Calu3 (cell line): ENCODE measurements at regions of chr3 and their contacts with region 1.

Region 1: GRCh38 chr3:152444029-152444641 is 175.4 kb downstream of the MBNL1 start:
- DNase-seq: no peak
- H3K4me3 Mint-ChIP-seq: no peak overlapping the region
- H3K27ac Mint-ChIP-seq: no peak overlapping the region
- H3K4me1 Mint-ChIP-seq: peaks cover 22% of the 10 kb centered on the region
- H3K27me3 Mint-ChIP-seq: no peaks in the 10 kb centered on the region
- CTCF ChIP-seq: peak; percentile 63

Region 2: DNA sequence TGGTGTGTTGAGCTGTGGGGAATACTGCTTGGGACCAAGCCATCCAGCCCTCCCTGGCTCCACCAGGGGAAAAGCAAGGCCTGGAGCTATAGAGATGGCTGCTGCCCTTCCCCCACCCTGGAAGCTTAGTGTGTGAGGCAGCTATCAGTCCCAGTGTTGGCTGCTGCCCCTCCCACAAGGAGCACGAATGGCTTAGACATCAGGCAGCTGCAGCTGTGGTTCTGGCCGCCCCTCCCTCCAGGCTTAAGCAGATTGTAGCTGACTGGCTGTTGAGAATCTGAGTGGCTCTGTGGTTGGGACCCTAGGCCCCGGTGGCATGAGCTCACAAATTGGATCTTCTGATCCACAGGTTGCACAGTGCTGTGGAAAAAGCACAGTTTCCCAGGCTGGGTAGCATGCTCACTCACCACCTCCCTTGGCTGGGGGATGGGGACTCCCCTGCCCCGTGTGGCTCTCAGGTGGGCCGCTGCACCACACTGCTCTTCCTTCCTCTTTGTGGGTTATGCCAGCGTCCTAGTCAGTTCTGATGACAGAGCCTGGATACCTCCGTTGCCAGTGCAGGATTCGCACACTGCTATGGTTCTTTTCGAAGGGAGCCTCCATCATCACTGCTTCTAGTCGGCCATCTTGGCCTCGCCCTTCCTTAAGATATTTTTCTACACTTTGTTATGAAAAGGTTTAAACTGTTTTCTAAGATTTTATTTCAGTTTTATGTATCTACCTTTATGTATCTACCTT is 591.9 kb before region 1 on chr3:
- CTCF ChIA-PET with region 1: no interaction called
- intact Hi-C with region 1: loop called (anchors 10 kb)
- DNase-seq: no peak
- H3K4me3 Mint-ChIP-seq: no peak overlapping the region
- H3K27ac Mint-ChIP-seq: no peak overlapping the region
- H3K4me1 Mint-ChIP-seq: peaks cover 21% of the 10 kb centered on the region
- H3K27me3 Mint-ChIP-seq: no peaks in the 10 kb centered on the region
- CTCF ChIP-seq: no peak

Region 3: DNA sequence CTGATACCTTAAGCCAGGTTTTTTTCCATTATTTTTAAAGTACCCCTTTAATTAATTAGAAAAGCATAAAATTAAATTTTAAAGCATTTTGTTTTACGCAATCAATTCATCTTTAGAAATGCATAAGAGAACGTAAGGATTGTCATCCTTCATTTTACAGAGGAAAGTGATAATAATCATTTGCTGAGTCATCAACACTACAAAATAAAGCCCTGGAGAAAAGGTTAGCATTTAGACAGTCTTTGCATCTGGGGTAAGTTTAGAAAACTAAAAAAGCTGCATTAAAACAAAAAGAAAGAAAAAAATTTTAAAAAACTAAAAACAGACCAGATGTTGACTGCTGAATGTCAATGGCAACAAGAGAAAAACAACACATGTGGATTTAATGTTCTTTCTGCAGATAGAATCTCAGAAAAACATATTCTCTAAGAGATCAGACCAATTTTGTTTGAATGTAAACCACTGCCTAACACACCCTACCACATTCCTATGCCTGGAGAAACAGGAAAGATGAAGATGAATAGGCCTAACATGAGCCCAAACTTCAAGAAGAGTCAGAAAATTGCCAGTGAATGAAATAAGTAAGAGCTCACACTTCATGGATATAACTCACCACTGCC is 510.8 kb before region 1 on chr3:
- CTCF ChIA-PET with region 1: no interaction called
- intact Hi-C with region 1: loop called (anchors 5 kb)
- DNase-seq: no peak
- H3K4me3 Mint-ChIP-seq: no peak overlapping the region
- H3K27ac Mint-ChIP-seq: no peak overlapping the region
- H3K4me1 Mint-ChIP-seq: no peaks in the 10 kb centered on the region
- H3K27me3 Mint-ChIP-seq: no peaks in the 10 kb centered on the region
- CTCF ChIP-seq: no peak

Region 4: DNA sequence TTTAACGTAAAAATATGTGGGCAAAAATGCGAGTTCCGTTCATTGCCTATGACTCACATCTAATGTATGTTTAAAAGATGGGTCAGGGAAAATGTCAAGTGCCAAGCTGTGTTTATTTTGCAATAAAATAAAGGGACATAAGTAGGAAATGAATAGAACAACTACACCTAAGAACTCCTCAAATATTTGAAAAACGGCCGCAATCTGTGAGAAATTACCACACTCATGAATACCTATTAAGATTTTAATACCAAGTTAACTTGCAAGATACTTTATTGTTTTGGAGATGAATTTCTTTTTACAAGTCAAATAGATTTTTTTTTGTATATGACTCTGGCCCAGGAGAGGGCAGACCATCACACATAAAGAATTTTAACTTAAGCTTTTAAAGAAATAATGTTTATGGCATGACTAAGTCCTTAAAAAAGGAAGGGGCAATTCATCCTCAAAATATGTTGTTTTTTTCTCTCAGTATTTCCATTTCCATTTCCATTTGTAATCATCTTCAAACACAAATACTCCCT is 418.0 kb before region 1 on chr3:
- CTCF ChIA-PET with region 1: interaction called, 3 read pairs
- intact Hi-C with region 1: loop called (anchors 2 kb)
- DNase-seq: peak; percentile 25
- H3K4me3 Mint-ChIP-seq: no peak overlapping the region
- H3K27ac Mint-ChIP-seq: peak overlapping the region; percentile 82
- H3K4me1 Mint-ChIP-seq: peaks cover 56% of the 10 kb centered on the region
- H3K27me3 Mint-ChIP-seq: no peaks in the 10 kb centered on the region
- CTCF ChIP-seq: no peak

Region 5: DNA sequence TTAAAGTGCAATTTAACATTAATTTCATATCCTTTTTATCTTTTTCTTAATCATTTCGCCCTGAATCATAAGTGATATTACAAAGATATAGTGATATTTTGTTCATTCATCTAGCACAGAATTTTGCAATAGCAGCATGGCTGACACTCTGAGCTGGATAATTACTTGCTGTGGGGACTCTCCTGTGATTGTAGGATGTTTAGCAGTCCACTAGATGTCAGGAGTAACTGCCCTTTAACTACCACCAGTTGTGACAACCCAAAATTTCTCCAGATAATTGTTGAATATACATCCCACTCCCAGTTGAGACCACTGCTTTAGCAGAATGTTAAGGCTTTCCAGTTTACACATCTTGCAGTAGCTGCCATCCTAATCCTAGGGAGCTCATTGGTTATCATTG is 372.2 kb before region 1 on chr3:
- CTCF ChIA-PET with region 1: interaction called, 3 read pairs
- intact Hi-C with region 1: loop called (anchors 1 kb)
- DNase-seq: peak; percentile 11
- H3K4me3 Mint-ChIP-seq: no peak overlapping the region
- H3K27ac Mint-ChIP-seq: no peak overlapping the region
- H3K4me1 Mint-ChIP-seq: no peaks in the 10 kb centered on the region
- H3K27me3 Mint-ChIP-seq: no peaks in the 10 kb centered on the region
- CTCF ChIP-seq: peak; percentile 29

Region 6: DNA sequence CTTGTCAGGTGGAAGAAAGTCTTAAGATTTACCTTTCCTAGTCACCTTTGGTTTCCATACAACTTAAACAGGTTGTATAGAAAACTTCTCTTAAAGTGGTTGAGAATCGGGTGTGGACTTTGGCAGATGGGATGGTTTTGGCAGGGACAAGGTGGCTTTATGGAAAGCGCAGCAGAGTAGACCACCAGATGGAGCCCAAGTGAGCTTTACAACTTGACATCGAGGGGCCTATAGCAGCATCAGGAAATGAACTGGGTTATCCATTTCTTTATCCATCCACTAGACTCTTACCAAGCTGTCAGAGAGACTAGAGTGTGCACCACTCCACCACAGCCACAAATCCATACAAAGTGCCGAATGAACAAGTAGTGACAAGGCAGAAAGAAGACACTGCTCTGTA is 260.7 kb before region 1 on chr3:
- CTCF ChIA-PET with region 1: interaction called, 17 read pairs
- intact Hi-C with region 1: loop called (anchors 1 kb)
- DNase-seq: peak; percentile 58
- H3K4me3 Mint-ChIP-seq: no peak overlapping the region
- H3K27ac Mint-ChIP-seq: no peak overlapping the region
- H3K4me1 Mint-ChIP-seq: peaks cover 8% of the 10 kb centered on the region
- H3K27me3 Mint-ChIP-seq: no peaks in the 10 kb centered on the region
- CTCF ChIP-seq: peak; percentile 24

Region 7: DNA sequence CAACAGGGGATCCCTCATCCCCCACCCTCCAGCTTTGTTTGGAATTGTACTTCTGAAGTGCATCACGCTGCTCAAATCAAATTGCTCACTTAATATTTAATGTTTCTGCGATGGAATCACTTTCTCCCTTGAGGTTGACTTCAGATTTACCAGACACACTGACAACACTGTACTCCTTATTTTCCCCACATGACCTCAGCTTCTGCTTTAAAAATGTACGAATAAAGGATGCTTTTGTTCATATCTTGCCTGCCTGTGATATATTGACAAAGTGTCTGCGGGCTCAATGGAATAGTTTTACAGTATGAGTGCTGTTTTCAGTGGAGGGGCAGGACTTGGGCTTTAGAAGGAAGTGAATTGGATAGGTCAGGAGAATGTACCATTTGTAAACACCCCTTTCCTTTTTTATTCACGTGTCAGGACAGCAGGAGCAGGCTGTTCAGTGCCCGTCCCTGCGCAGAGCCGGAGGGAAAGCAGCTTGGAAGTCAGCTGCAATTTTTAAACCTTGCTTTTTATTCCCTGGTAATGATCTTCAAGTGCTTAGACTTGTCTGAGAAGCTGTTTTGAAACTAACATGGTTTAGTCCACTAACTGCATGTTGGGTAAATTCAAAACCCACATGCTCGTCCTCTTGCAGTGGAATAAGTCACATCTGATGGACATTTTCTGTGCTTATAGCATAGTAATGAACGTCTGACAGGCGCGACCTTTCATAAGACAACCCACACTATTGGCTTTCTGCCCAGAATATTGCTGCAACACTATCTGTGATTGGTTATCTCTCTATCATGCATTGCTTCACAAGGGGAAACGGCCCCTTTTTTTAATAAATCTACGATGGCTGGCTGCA is 145.5 kb before region 1 on chr3:
- CTCF ChIA-PET with region 1: no interaction called
- intact Hi-C with region 1: loop called (anchors 10 kb)
- DNase-seq: peak; percentile 78
- H3K4me3 Mint-ChIP-seq: peak overlapping the region; percentile 73
- H3K27ac Mint-ChIP-seq: peak overlapping the region; percentile 95
- H3K4me1 Mint-ChIP-seq: peaks cover 49% of the 10 kb centered on the region
- H3K27me3 Mint-ChIP-seq: no peaks in the 10 kb centered on the region
- CTCF ChIP-seq: no peak